ENCODE measurements at regions of chr15 and their contacts with region 1.

Region 1: DNA sequence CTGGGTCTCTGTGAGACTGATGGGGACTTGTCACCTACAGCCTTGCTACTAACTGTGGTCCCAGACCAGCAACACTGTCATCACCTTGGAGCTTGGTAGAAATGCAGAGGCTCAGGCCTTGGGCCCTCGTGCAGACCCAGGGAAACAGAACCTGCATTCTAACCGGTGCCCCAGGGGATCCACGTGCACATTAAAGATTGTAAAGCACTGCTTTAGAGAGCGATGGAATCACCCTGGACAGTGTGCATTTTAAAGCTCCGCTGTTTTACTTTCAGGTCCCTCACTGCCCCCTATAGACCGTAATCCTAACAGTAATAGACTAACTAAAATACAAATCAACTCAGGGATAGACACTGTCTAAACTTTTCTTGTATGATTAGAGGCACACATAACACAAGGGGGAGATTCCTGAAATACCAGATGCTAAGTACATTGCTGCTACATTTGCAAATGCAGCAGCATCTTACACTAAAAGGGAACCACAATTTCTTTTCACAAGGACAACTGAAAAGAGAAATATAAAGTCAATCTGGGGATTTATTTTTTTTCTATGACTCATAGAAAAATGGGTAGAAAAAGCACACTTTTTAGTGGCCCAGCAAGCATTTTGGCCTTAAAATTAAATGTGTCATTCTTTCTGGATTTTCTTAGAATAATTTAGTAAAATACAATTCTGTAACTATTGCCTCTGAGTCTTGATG is 10.5 kb upstream of the SH3GL3 start:
- DNase-seq: no peak
- ATAC-seq: peak; percentile 57

Region 2: GRCh38 chr15:82875411-82876003 is 561.1 kb before region 1 on chr15:
- intact Hi-C with region 1: no loop called
- DNase-seq: no peak
- ATAC-seq: no peak

Region 3: DNA sequence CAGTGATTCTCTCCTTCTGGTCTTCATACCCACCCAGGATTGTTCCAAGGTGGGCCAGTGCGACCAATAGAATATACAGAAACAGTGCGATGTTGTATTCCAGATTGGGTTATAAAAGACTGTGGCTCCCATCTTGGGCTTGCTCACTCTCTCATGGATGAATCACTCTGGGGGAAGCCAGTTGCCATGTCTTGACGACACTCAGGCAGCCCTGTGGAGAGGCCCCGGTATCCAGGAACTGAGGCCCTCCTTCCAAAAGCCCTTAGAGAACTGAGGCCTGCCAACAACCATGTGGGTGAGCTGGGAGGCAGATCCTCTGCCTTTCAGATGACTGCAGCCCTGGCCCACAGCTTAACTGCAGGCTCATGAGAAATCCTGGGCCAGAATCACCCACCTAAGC is 67.8 kb after region 1 on chr15:
- intact Hi-C with region 1: no loop called
- DNase-seq: no peak
- ATAC-seq: no peak

Region 4: GRCh38 chr15:83559310-83559966 is 122.8 kb after region 1 on chr15:
- intact Hi-C with region 1: loop called (anchors 1 kb)
- DNase-seq: no peak
- ATAC-seq: peak; percentile 76

Measured in Right ventricle myocardium inferior (tissue), 1 donor.